GM12878 (cell line): ENCODE measurements at regions of chr9 and their contacts with region 1.

Region 1: DNA sequence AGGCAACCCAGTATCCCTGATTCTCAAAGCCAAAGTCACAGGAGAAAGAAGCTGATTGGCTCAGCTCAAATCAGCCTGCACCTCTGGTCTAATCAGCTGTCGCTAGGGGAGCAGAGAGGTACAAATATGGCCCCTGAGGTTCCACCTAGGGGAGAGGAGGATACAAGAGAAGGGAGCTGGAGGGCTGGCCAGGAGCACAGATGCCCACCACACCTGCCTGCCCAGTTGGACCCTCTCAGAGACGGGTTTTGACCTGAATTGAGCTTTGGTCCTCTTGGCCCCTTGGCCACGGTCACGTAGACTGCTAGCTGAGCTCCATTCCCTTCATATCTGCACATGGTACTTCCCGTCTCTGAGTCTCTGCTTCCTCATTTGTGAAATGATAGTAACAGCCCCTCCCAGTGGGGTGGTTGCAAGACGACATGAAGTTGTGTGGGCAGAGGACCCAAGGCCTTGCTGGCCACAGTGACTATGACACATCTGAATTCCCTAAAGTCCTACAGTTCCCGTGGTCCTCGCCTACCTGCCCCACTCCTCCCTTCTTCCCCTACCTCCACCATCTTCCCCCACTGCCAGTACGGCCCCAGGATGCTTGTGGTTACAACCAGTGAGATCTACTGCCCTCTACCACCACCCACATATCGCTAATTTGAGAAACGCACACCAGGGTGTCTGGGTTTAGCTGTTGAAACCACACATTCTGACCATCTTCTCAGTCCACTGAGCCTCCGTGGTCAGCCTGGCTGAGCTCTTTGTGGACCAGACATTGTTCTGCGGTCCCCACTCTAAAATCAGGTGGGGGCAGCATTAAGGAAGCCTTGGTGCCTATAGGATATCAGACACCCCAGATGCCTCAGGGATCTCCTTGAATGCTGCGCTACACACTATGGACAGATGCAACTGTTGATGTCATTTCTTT is 60.3 kb upstream of the NEK6 start:
- DNase-seq: peak; percentile 95
- ATAC-seq: peak; percentile 75
- H3K4me3 ChIP-seq: peak overlapping the region; percentile 22; the same call in 1 of the 2 replicates
- H3K27ac ChIP-seq: peak overlapping the region; percentile 99
- H3K4me1 ChIP-seq: peaks cover 58% of the 10 kb centered on the region
- H3K27me3 ChIP-seq: no peaks in the 10 kb centered on the region
- CTCF ChIP-seq: peak in 2 of 3 experiments; percentile 1 to 17; a peak in 2 of 6 replicates
- EP300 ChIP-seq: peak; percentile 84 to 92
- POLR2A ChIP-seq: peak; percentile 76
- RAD21 ChIP-seq: peak; percentile 34

Region 2: GRCh38 chr9:122904823-122905710 is 1292.4 kb before region 1 on chr9 and contains the start of gene RC3H2:
- CTCF ChIA-PET with region 1: no interaction called
- POLR2A ChIA-PET with region 1: no interaction called
- RAD21 ChIA-PET with region 1: no interaction called
- SMC1A ChIA-PET with region 1: no interaction called
- in situ Hi-C with region 1: no loop called
- intact Hi-C with region 1: no loop called
- DNase-seq: peak; percentile 99
- ATAC-seq: peak; percentile 88
- H3K4me3 ChIP-seq: peak within 1 kb of the TSS; percentile 98
- H3K27ac ChIP-seq: peak within 1 kb of the TSS; percentile 92
- H3K4me1 ChIP-seq: peaks cover 6% of the 10 kb centered on the region
- H3K27me3 ChIP-seq: no peaks in the 10 kb centered on the region
- CTCF ChIP-seq: no peak
- EP300 ChIP-seq: peak; percentile 31 to 38; a peak in 1 of 4 replicates
- POLR2A ChIP-seq: peak; percentile 94
- RAD21 ChIP-seq: no peak
- polyA plus RNA-seq, gene RC3H2: 7.2 to 9.1 TPM

Region 3: GRCh38 chr9:124133727-124134126 is 63.7 kb before region 1 on chr9:
- CTCF ChIA-PET with region 1: interaction called, 20 read pairs
- POLR2A ChIA-PET with region 1: interaction called, 27 read pairs
- RAD21 ChIA-PET with region 1: interaction called, 85 read pairs
- SMC1A ChIA-PET with region 1: interaction called, 89 read pairs
- in situ Hi-C with region 1: no loop called
- intact Hi-C with region 1: loop called (anchors 1 kb)
- DNase-seq: no peak
- ATAC-seq: peak; percentile 29
- H3K4me3 ChIP-seq: no peak overlapping the region
- H3K27ac ChIP-seq: no peak overlapping the region
- H3K4me1 ChIP-seq: peaks cover 21% of the 10 kb centered on the region
- H3K27me3 ChIP-seq: no peaks in the 10 kb centered on the region
- CTCF ChIP-seq: peak; percentile 27 to 63 (median 31); a peak in 4 of 6 replicates
- EP300 ChIP-seq: no peak
- POLR2A ChIP-seq: no peak
- RAD21 ChIP-seq: peak; percentile 46

Region 4: GRCh38 chr9:124174433-124174832 is 23.0 kb before region 1 on chr9:
- CTCF ChIA-PET with region 1: no interaction called
- POLR2A ChIA-PET with region 1: interaction called, 3 read pairs
- RAD21 ChIA-PET with region 1: interaction called, 3 read pairs
- SMC1A ChIA-PET with region 1: interaction called, 11 read pairs
- in situ Hi-C with region 1: no loop called
- intact Hi-C with region 1: loop called (anchors 2 kb)
- DNase-seq: peak; percentile 25
- ATAC-seq: peak; percentile 44
- H3K4me3 ChIP-seq: peak overlapping the region; percentile 31; the same call in 1 of the 2 replicates
- H3K27ac ChIP-seq: peak overlapping the region; percentile 50
- H3K4me1 ChIP-seq: peaks cover 10% of the 10 kb centered on the region
- H3K27me3 ChIP-seq: no peaks in the 10 kb centered on the region; a peak in 1 of 4 replicates
- CTCF ChIP-seq: no peak
- EP300 ChIP-seq: no peak
- POLR2A ChIP-seq: no peak
- RAD21 ChIP-seq: no peak

Region 5: GRCh38 chr9:124210697-124211096 is 13.3 kb after region 1 on chr9:
- CTCF ChIA-PET with region 1: interaction called, 78 read pairs
- POLR2A ChIA-PET with region 1: interaction called, 59 read pairs
- RAD21 ChIA-PET with region 1: interaction called, 293 read pairs
- SMC1A ChIA-PET with region 1: interaction called, 249 read pairs
- in situ Hi-C with region 1: no loop called
- intact Hi-C with region 1: no loop called
- DNase-seq: peak; percentile 69
- ATAC-seq: peak; percentile 87
- H3K4me3 ChIP-seq: no peak overlapping the region
- H3K27ac ChIP-seq: peak overlapping the region; percentile 57
- H3K4me1 ChIP-seq: peaks cover 72% of the 10 kb centered on the region
- H3K27me3 ChIP-seq: no peaks in the 10 kb centered on the region
- CTCF ChIP-seq: no peak
- EP300 ChIP-seq: peak; percentile 55 to 81; a peak in 2 of 4 replicates
- POLR2A ChIP-seq: no peak
- RAD21 ChIP-seq: no peak; the same call in 1 of the 2 replicates

Region 6: DNA sequence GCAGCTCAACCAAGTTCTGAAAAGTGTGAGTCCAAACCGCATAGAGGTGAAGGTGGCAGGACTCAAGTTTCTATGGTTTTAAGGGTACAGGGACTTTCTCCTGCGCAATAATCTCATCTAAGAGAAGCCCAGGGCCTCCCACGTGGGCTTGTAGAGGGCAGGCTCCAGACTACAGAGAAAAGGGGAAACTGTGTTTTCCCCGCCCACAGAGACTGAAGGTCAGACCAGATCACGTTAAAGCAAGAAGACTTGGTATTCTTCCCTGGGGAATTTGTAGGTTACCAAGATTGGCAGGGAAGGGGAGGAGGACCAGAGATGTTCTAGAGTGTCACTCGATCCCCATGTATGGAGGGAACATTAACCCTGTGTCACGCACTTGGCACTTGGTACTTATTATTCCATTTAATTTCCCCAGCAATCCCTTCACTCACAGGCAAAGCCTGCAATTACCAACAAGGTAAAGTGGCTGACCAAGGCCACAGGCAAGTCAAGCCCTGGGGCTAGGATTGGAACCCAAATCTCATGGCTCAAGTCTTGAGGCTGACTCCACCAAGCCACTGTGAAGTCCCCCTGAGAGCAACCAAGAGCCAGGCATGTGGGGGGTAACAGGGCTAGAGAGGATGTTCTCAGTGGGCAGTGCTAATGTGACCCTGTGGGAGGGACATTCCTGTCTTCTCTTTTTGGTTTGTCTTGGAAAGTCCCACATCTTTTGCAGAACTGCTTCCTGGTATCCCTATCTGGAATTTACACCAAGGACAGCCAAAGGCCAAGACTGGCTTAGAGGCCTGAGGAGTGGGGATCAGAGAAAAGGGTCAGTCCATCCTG is 42.0 kb after region 1 on chr9:
- CTCF ChIA-PET with region 1: interaction called, 6 read pairs
- POLR2A ChIA-PET with region 1: interaction called, 10 read pairs
- RAD21 ChIA-PET with region 1: interaction called, 13 read pairs
- SMC1A ChIA-PET with region 1: interaction called, 17 read pairs
- in situ Hi-C with region 1: no loop called
- intact Hi-C with region 1: loop called (anchors 2 kb)
- DNase-seq: peak; percentile 72
- ATAC-seq: peak; percentile 95
- H3K4me3 ChIP-seq: no peak overlapping the region
- H3K27ac ChIP-seq: peak overlapping the region; percentile 89
- H3K4me1 ChIP-seq: peaks cover 39% of the 10 kb centered on the region
- H3K27me3 ChIP-seq: no peaks in the 10 kb centered on the region
- CTCF ChIP-seq: no peak
- EP300 ChIP-seq: peak; percentile 37 to 52; a peak in 2 of 4 replicates
- POLR2A ChIP-seq: no peak
- RAD21 ChIP-seq: no peak

Region 7: GRCh38 chr9:124267271-124267807 is 69.9 kb after region 1 on chr9:
- CTCF ChIA-PET with region 1: interaction called, 6 read pairs
- POLR2A ChIA-PET with region 1: interaction called, 15 read pairs
- RAD21 ChIA-PET with region 1: interaction called, 12 read pairs
- SMC1A ChIA-PET with region 1: interaction called, 23 read pairs
- in situ Hi-C with region 1: no loop called
- intact Hi-C with region 1: loop called (anchors 2 kb)
- DNase-seq: no peak
- ATAC-seq: peak; percentile 8
- H3K4me3 ChIP-seq: peak overlapping the region; percentile 61; the same call in 1 of the 2 replicates
- H3K27ac ChIP-seq: peak overlapping the region; percentile 7
- H3K4me1 ChIP-seq: peaks cover 44% of the 10 kb centered on the region
- H3K27me3 ChIP-seq: no peaks in the 10 kb centered on the region
- CTCF ChIP-seq: 0 out of 6 replicates have a peak, but pooled peaks of 1 of the 3 experiments have one; percentile 8
- EP300 ChIP-seq: no peak
- POLR2A ChIP-seq: peak; percentile 18
- RAD21 ChIP-seq: no peak

Region 8: DNA sequence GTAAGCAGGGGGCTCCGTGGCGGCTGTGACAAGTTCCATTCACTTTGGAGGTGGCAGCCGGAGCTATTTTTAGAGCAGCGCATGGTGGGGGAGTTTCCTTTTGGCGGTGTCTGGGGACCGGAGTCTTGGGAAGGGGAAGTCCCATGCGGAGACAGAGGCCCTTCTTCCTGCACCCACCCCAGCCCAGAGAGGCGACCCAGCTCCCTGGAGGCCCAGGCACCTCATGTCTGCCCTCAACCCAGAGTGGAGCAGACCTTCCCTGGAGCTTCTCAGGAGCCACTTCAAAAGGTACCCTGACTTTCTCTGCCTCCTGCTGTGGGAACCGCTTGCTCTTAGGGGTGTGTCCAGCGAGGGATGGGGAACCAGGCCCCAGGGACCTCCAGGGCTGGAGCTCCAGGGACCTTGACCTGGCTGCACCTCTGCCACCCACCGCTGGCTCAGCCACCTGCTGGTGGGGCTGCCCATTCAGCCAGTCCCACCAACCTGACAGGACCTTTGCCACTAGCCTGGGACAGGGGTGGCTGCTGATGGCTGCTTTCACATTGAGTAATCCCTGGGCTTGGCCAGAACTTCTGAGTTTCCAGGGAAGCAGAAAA is 94.5 kb after region 1 on chr9:
- CTCF ChIA-PET with region 1: interaction called, 27 read pairs
- POLR2A ChIA-PET with region 1: interaction called, 14 read pairs
- RAD21 ChIA-PET with region 1: interaction called, 70 read pairs
- SMC1A ChIA-PET with region 1: interaction called, 32 read pairs
- in situ Hi-C with region 1: no loop called
- intact Hi-C with region 1: no loop called
- DNase-seq: peak; percentile 77
- ATAC-seq: peak; percentile 67
- H3K4me3 ChIP-seq: peak overlapping the region; percentile 56
- H3K27ac ChIP-seq: peak overlapping the region; percentile 91
- H3K4me1 ChIP-seq: peaks cover 90% of the 10 kb centered on the region
- H3K27me3 ChIP-seq: no peaks in the 10 kb centered on the region
- CTCF ChIP-seq: peak; percentile 18 to 41 (median 21); a peak in 3 of 6 replicates
- EP300 ChIP-seq: peak; percentile 45 to 68; a peak in 3 of 4 replicates
- POLR2A ChIP-seq: peak; percentile 45
- RAD21 ChIP-seq: no peak